Calu3 (cell line): ENCODE measurements at regions of chr11 and their contacts with region 1.

Region 1: DNA sequence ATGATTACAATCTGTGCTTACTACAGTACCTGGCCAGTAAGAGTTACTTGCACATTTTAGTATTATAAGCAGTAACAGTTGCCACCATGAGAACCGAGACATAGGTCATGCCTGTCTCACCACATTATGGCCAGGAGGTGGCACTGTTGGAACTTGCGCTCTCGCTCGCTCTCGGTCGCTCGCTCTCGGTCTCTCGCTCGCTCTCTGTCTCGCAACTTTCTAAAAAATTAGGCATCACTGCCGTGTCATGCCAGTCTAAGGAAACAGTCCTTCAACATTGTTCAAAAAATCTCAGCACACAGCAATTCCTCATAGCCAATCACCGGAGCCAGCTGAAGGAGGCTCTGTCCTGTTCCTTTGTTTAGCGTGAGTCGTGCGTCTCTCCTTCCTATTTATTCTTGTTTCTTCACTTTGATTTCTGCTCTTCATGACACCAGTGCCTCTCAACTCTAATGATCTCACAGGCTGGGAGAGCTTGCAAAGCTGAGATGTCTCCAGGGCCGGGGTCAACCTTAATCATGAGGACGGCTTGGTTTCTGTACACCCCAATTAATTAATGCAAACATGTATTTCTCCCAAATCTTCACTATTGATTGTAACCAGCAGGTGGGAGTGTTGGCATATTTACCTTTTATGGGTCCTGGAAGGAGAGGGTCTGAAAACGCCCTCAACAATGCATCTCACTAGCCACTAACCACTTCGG is 6.3 kb upstream of the ADAMTS8 start:
- DNase-seq: peak; percentile 64
- H3K4me3 Mint-ChIP-seq: no peak overlapping the region
- H3K27ac Mint-ChIP-seq: no peak overlapping the region
- H3K4me1 Mint-ChIP-seq: no peaks in the 10 kb centered on the region
- H3K27me3 Mint-ChIP-seq: peaks cover 35% of the 10 kb centered on the region
- CTCF ChIP-seq: peak; percentile 53

Region 2: DNA sequence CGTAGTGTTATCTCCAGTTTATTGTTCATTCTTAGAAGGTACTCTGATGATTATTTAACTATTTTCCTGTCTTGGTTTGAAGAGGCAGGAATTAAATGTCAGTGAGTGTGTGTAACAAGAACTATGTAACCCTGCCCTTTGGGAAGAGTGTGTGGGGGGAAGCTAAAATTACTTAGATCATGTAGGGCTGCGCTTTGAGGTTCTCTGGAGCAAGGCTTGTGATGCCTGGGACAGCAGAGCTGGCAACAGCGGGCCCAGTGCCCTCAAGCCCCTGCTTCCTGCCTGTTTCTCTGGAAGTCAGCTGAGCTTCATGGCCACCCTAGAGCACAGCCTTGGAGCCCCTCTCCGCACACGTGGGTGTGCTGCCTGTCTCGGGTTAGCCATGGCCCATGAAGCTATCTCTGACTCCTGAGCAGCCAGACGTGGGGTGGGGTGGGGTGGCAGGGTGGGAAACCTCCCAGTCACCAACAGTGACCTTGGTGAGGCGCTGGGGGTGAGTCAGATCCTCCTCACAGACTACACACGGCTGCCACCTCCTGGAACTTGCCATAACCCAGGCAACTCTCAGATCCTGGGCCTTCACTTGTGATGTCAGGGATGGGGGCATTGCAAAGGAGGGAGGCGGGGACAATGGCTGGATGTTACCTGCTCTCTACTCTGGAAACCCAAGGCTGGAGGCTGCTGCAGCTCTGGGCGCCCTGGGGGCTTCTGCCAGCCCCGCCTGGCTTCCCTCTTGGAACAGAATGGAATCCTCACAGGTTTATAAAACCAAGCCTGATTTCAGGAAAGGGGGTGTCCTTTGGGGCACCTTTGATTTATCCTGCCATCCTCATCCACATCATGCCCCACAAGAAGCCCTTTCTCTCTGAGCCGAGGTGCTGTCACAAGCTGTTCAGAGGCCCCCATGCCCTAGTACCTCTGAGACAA is 393.0 kb after region 1 on chr11:
- CTCF ChIA-PET with region 1: interaction called, 35 read pairs
- intact Hi-C with region 1: loop called (anchors 1 kb)
- DNase-seq: peak; percentile 65
- H3K4me3 Mint-ChIP-seq: no peak overlapping the region
- H3K27ac Mint-ChIP-seq: no peak overlapping the region
- H3K4me1 Mint-ChIP-seq: no peaks in the 10 kb centered on the region
- H3K27me3 Mint-ChIP-seq: no peaks in the 10 kb centered on the region
- CTCF ChIP-seq: peak; percentile 29

Region 3: GRCh38 chr11:130847517-130847916 is 412.8 kb after region 1 on chr11:
- CTCF ChIA-PET with region 1: interaction called, 4 read pairs
- intact Hi-C with region 1: loop called (anchors 5 kb)
- DNase-seq: peak; percentile 36
- H3K4me3 Mint-ChIP-seq: peak overlapping the region; percentile 52
- H3K27ac Mint-ChIP-seq: peak overlapping the region; percentile 61
- H3K4me1 Mint-ChIP-seq: peaks cover 16% of the 10 kb centered on the region
- H3K27me3 Mint-ChIP-seq: no peaks in the 10 kb centered on the region
- CTCF ChIP-seq: no peak

Region 4: DNA sequence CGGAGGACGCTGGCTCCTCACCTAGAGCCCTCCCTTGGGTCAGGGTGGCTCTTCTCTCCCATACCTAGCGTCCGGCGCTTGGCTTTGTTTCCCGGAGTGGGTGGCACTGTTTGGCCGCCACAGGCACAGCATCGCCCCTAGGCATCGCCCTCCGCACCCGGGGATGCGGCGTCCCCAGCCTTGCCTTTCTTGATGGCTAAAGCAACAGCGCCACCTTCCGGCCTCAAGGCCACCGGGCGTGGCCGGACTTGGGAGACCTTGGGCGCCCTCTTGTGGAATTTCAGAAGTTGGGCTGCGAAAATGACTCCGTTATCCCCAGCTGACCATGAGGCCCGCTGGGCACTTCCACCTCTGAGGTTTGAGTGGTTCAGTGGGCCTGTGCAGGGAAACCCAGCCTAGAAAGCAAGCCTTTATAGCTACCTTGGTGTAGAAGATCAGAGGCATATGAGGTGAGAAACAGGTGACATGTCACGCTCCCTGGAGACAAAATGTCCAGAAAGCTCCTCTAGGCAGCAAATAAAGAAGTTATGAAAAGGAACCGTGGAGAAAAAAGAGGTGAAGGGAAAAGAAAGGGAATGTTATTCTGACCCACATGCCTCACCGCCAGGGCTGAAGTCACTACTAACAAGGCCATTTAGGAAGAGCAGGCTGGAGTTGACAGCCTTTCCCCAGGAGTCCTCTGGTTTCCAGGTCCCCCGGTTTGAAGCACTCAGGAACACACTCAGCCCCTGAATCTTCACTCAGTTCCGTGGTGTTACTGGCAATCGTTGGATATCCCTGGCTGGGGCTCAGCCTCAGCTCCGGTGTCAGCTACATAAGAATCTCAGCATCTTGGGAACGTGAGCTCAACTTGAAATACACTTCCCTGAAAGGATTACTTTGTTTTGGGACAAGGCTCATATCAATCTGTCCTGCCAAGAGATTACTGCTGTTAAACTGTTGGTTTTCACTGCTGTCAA is 427.5 kb after region 1 on chr11:
- CTCF ChIA-PET with region 1: interaction called, 28 read pairs
- intact Hi-C with region 1: loop called (anchors 1 kb)
- DNase-seq: peak; percentile 82
- H3K4me3 Mint-ChIP-seq: no peak overlapping the region
- H3K27ac Mint-ChIP-seq: no peak overlapping the region
- H3K4me1 Mint-ChIP-seq: no peaks in the 10 kb centered on the region
- H3K27me3 Mint-ChIP-seq: no peaks in the 10 kb centered on the region
- CTCF ChIP-seq: peak; percentile 98

Region 5: DNA sequence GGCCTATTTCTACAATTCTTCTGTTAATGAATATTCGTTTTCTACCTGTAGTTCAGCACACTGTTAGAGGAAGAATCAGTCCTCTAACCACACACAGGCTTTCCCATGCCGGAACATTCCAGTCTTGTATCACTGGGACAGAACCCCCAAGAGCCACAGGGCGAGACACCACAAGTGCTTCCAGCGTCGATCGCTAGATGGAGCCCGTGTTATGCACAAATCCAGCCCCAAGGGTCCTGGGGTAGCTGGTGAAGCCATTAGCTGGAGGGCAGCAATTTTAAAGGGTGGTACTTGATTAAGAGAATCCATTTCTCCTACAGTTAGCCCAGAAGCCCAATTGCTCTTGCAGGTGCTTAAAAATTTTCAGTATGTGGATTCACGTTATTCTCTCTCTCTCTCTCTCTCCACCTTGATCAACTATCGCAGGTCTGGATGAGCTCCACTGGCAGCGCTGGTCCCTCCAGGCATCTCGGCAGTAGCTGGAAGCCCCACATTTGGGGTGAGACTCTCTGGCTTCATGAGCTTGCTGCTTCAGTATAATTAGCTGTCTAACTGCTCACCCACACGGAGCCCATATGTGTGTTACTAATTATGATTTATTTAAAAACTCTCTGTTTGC is 629.8 kb after region 1 on chr11:
- CTCF ChIA-PET with region 1: no interaction called
- intact Hi-C with region 1: no loop called
- DNase-seq: peak; percentile 47
- H3K4me3 Mint-ChIP-seq: no peak overlapping the region
- H3K27ac Mint-ChIP-seq: no peak overlapping the region
- H3K4me1 Mint-ChIP-seq: no peaks in the 10 kb centered on the region
- H3K27me3 Mint-ChIP-seq: peaks cover 42% of the 10 kb centered on the region
- CTCF ChIP-seq: peak; percentile 62